ENCODE measurements at regions of chr16 and their contacts with region 1.

Region 1: DNA sequence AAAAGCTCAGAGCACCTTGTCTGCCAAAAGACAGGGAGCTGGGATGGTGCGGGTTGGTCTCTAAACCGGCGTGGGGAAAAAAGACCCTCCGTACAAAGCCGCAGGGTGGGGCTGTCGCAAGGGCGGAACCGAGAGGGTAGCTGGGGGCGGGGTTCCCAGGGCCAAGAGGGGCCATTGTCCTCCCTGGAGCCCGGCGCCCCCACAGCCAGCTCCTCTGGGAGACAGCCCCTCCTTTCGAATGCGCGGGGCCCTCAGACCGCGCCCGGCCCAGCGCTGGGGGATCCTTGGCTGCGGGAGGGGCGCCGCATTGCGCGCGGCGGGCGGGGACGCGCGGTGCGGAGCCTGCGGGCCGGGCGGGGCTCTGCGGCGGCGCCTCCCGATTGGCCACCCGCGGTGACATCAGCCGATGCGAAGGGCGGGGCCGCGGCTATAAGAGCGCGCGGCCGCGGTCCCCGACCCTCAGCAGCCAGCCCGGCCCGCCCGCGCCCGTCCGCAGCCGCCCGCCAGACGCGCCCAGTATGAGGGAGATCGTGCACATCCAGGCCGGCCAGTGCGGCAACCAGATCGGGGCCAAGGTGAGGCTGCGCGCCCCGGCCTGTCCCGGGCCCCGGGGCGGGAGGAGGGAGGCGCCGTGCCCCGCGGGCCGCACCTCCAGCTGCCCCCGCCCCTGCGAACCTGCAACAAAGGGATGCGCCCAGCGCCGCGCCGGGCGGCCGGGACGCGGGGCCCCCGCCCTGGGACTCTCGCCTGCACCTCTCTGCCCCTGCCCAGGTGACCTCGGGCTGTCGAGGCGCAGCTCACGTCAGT is at the start of gene TUBB3:
- DNase-seq: no peak
- H3K4me3 ChIP-seq: peak within 1 kb of the TSS; percentile 84
- H3K27ac ChIP-seq: peak within 1 kb of the TSS; percentile 98
- H3K27me3 ChIP-seq: no peaks in the 10 kb centered on the region
- CTCF ChIP-seq: peak; percentile 21; the same call in 1 of the 2 replicates
- polyA plus RNA-seq, gene TUBB3: 129 and 173 TPM in 2 replicates

Region 2: GRCh38 chr16:89873972-89874689 is 49.0 kb before region 1 on chr16:
- CTCF ChIA-PET with region 1: interaction called, 9 read pairs
- POLR2A ChIA-PET with region 1: interaction called, 59 read pairs
- DNase-seq: peak; percentile 94
- H3K4me3 ChIP-seq: peak overlapping the region; percentile 92
- H3K27ac ChIP-seq: peak overlapping the region; percentile 73
- H3K27me3 ChIP-seq: no peaks in the 10 kb centered on the region
- CTCF ChIP-seq: no peak

Region 3: GRCh38 chr16:89909777-89910716 is 13.0 kb before region 1 on chr16:
- CTCF ChIA-PET with region 1: interaction called, 11 read pairs
- POLR2A ChIA-PET with region 1: interaction called, 13 read pairs
- DNase-seq: no peak
- H3K4me3 ChIP-seq: no peak overlapping the region
- H3K27ac ChIP-seq: peak overlapping the region; percentile 21
- H3K27me3 ChIP-seq: no peaks in the 10 kb centered on the region
- CTCF ChIP-seq: peak; percentile 76

Region 4: GRCh38 chr16:89949121-89949742 is 26.1 kb after region 1 on chr16:
- CTCF ChIA-PET with region 1: no interaction called
- POLR2A ChIA-PET with region 1: interaction called, 17 read pairs
- DNase-seq: no peak
- H3K4me3 ChIP-seq: peak overlapping the region; percentile 66
- H3K27ac ChIP-seq: no peak overlapping the region
- H3K27me3 ChIP-seq: no peaks in the 10 kb centered on the region
- CTCF ChIP-seq: no peak

Measured in AG04450 (cell line).